Posterior vena cava (tissue), 2 donors: ENCODE measurements at regions of chr17 and their contacts with region 1.

Region 1: DNA sequence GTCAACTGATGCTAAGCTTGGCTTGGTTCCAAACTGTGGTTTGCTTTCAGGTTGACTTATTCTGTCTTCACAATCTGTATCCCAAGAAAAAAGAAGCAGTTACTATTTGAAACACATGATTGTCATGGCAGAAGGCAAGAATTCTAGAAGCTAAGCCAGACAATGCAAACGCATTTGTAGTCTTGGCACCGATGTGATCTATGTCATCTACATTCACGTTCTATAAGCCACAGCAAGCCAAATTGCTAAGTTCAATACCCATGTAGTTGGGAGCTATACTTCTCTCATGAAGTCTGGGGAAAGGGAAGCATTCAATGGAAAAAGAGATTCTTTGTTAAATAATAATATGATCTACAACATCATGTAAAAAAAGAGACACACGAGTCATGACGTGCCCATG is 18.3 kb upstream of the KIF2B start:
- DNase-seq: no peak

Region 2: DNA sequence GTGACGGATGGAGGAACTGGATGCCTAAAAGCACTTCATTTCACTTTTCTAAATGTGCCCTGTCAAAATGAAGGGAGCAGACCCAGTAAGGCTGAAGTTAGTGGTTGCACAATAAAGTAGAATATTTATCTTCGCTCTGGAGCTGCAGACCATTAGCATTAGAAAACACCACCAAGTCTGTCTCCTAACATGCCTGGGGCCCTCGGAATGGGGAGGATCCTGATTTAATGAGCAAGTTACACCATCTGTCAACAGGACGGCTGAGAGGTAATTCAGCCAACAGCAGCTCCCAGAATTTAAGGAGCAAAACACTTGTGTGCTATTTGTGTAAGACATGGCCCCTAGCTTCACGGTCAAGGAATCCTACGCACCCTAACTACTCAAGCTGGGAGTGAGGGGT is 1668.3 kb before region 1 on chr17:
- intact Hi-C with region 1: no loop called
- DNase-seq: no peak

Region 3: DNA sequence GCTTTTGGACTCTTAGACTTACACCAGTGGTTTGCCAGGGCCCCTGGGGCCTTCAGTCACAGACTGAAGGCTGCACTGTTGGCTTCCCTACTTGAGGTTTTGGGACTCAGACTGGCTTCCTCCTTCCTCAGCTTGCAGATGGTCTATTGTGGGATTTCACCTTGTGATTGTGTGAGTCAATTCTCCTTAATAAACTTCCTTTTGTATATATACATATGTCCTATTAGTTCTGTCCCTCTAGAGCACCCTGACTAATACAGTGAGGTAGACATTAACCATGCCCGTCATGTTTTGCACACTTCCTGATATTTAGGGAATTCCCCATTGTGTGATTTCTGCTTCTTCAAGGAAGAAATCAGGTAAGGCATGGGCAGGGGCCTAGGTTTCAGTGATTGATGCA is 1498.1 kb before region 1 on chr17:
- intact Hi-C with region 1: loop called in 1 of 2 experiments (anchors 5 kb)
- DNase-seq: no peak

Region 4: GRCh38 chr17:53932386-53932785 is 127.9 kb after region 1 on chr17:
- intact Hi-C with region 1: no loop called
- DNase-seq: no peak